ENCODE measurements at regions of chr4 and their contacts with region 1.

Region 1: GRCh38 chr4:78056265-78057129 is 626 bp upstream of the FRAS1 start:
- DNase-seq: peak; percentile 41
- H3K4me3 ChIP-seq: peak overlapping the region; percentile 47 to 80 (median 51)
- H3K27ac ChIP-seq: no peak overlapping the region
- H3K4me1 ChIP-seq: peaks cover 28% of the 10 kb centered on the region
- H3K27me3 ChIP-seq: peaks cover 15 to 19% of the 10 kb centered on the region in 2 experiments
- CTCF ChIP-seq: no peak
- POLR2A ChIP-seq: no peak

Region 2: GRCh38 chr4:77819843-77820648 is 236.5 kb before region 1 on chr4:
- CTCF ChIA-PET with region 1: interaction called, 3 read pairs
- POLR2A ChIA-PET with region 1: no interaction called
- dilution Hi-C with region 1: no loop called
- intact Hi-C with region 1: loop called (anchors 2 kb)
- DNase-seq: peak; percentile 89
- H3K4me3 ChIP-seq: peak overlapping the region; percentile 85 to 99 (median 94)
- H3K27ac ChIP-seq: peak overlapping the region; percentile 96
- H3K4me1 ChIP-seq: peaks cover 28% of the 10 kb centered on the region
- H3K27me3 ChIP-seq: no peaks in the 10 kb centered on the region
- CTCF ChIP-seq: no peak
- POLR2A ChIP-seq: peak; percentile 90

Region 3: GRCh38 chr4:78336093-78336943 is 279.8 kb after region 1 on chr4:
- CTCF ChIA-PET with region 1: no interaction called
- POLR2A ChIA-PET with region 1: no interaction called
- dilution Hi-C with region 1: no loop called
- intact Hi-C with region 1: no loop called
- DNase-seq: no peak
- H3K4me3 ChIP-seq: no peak overlapping the region
- H3K27ac ChIP-seq: no peak overlapping the region
- H3K4me1 ChIP-seq: no peaks in the 10 kb centered on the region
- H3K27me3 ChIP-seq: no peaks in the 10 kb centered on the region
- CTCF ChIP-seq: no peak
- POLR2A ChIP-seq: no peak

Region 4: DNA sequence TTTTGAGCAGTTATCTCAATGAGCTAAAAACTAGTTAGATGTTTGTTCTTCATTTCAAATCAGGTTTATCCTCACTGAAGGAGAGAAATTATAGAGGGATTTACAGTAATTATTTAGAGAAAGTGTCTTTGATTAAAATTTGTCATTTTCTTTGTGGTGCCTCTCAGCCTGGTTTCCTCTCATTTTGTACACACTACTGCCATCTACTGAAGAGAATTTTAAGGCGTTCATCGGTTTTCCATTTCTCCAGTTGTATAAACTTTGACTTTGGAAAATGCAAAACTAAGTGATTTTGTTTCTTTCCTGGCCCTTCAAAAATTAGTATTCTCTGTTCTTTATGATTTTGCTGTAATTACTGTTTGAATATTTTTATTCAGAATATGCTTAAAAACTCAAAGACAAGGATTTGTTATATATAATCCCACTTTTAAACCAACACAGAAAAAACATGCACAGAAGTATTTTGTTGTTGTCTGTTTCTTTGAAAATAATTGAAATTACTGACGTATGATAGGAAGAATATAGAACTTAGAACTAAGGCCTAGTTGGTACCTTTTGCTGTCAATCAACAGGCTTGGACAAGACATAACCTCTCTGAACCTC is 460.7 kb after region 1 on chr4:
- CTCF ChIA-PET with region 1: interaction called, 6 read pairs
- POLR2A ChIA-PET with region 1: no interaction called
- dilution Hi-C with region 1: no loop called
- intact Hi-C with region 1: loop called (anchors 1 kb)
- DNase-seq: peak; percentile 53
- H3K4me3 ChIP-seq: no peak overlapping the region
- H3K27ac ChIP-seq: no peak overlapping the region
- H3K4me1 ChIP-seq: peaks cover 8% of the 10 kb centered on the region
- H3K27me3 ChIP-seq: no peaks in the 10 kb centered on the region
- CTCF ChIP-seq: peak; percentile 24 to 34
- POLR2A ChIP-seq: no peak

Region 5: DNA sequence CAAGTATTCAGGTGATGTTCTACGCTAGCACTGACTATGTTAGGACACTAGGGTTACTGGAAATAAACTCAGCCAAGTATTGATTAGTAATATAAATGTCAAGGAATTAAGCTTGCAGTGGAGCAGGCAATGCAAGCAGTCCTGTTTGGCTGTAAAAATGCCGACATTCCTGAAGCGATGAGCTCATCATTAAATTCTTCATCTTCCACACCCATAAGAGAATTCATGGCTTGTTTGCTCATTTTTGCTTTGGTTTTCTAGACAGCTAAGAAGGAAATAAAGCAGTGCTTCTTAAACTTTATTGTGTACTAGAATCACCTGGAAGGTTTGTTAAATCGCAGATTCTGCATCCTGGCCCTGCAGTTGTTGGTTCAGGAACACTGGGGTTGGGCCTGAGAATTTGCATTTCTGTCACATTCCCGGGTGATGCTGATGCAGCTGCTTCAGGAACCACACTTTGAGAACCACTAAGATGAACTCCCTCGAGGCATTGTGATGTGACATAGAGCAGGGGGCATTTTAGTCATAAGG is 512.9 kb after region 1 on chr4:
- CTCF ChIA-PET with region 1: no interaction called
- POLR2A ChIA-PET with region 1: no interaction called
- dilution Hi-C with region 1: no loop called
- intact Hi-C with region 1: loop called (anchors 5 kb)
- DNase-seq: peak; percentile 80
- H3K4me3 ChIP-seq: peak overlapping the region in 1 of 3 experiments; percentile 44
- H3K27ac ChIP-seq: peak overlapping the region; percentile 81
- H3K4me1 ChIP-seq: peaks cover 30% of the 10 kb centered on the region
- H3K27me3 ChIP-seq: no peaks in the 10 kb centered on the region
- CTCF ChIP-seq: no peak
- POLR2A ChIP-seq: no peak

Region 6: DNA sequence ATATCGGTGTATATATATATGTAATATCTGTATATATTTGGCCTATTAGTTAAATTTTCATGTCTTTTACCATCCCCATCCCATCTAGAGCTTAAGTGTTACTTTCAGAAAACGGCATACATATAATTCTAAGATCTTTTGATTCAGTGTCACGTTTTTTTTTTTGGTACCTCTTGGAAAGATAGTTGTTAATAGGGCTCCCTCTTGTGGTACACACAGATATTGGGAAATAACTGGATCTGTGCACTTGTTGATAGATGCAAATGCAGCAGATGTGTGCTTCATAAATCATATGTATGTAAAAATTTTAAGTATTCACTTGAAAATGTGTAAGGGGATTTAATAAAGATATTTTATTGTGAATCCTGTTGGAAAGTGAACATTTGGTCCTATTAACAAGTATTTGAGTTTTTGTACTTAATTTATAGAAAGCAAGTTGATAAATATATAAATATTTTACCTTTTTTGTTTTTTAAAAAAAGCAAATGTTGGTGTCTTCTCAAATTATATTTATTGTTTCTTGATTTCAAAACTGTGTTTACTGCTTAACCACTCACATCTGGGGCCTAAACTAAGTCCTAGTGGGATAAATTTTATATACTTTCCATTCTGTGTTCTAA is 808.0 kb after region 1 on chr4:
- CTCF ChIA-PET with region 1: no interaction called
- POLR2A ChIA-PET with region 1: no interaction called
- dilution Hi-C with region 1: no loop called
- intact Hi-C with region 1: loop called (anchors 2 kb)
- DNase-seq: peak; percentile 85
- H3K4me3 ChIP-seq: no peak overlapping the region
- H3K27ac ChIP-seq: no peak overlapping the region
- H3K4me1 ChIP-seq: no peaks in the 10 kb centered on the region
- H3K27me3 ChIP-seq: no peaks in the 10 kb centered on the region
- CTCF ChIP-seq: peak; percentile 41 to 42
- POLR2A ChIP-seq: no peak